B cell (primary cell): ENCODE measurements at regions of chr1 and their contacts with region 1.

Region 1: GRCh38 chr1:221045842-221046831 is 166.9 kb downstream of the HLX start:
- DNase-seq: peak; percentile 82
- ATAC-seq: peak; percentile 87
- H3K4me3 ChIP-seq: peak overlapping the region in 4 of 5 experiments; percentile 11 to 52 (median 36)
- H3K4me3 Mint-ChIP-seq: peak overlapping the region; percentile 88
- H3K27ac ChIP-seq: peak overlapping the region; percentile 75 to 94
- H3K27ac Mint-ChIP-seq: peak overlapping the region; percentile 97
- H3K4me1 ChIP-seq: peaks cover 34 to 36% of the 10 kb centered on the region in 2 donors
- H3K4me1 Mint-ChIP-seq: peaks cover 54% of the 10 kb centered on the region
- H3K27me3 ChIP-seq: no peaks in the 10 kb centered on the region
- H3K27me3 Mint-ChIP-seq: no peaks in the 10 kb centered on the region
- CTCF ChIP-seq: no peak

Region 2: DNA sequence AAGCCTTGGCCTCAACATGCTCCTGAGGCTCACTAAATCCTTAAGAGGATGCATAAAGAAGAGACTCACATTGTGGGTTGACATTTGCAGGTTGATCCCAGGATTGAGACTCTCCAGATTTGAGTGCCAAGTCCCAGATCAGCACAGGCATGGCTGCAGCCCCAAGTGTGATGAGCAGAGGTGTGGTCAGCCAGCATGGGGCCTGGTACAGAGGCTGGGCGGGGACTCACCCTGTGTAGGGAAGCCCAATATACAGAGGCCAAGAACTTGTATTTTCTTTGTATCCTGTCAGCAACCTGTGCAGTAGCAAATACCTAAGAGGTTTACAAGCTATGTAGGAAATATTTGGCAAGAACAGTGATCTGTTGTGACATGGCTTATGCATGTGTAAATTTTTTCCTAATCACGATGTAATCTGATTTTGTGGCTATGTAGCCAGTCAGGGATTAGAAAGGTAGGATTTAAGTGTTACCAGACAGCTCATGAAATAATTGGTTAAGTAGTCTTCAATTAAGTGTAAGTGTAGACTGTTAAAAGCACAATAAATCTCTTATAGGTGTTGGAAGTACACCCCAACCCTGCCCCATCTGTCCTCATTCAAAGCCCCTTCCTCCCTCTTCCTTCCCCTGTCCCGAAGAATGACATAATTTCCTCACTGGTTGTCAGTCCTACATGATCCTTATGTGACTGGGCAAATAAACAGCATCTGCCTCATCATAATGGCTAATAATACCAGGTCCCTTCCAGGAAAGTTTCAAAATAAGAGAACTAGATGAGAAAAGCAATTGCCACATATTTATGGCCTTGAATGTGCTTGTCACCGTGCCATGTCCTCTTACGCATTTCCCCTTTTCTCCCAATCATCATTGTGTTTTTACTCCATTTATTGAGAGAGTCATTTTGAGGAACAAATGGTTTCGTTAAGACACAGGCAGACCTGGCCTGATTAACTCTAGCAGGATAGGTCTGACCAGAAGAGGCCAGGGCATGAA is 46.0 kb before region 1 on chr1:
- CTCF ChIA-PET with region 1: no interaction called
- POLR2A ChIA-PET with region 1: no interaction called
- intact Hi-C with region 1: no loop called
- DNase-seq: no peak
- ATAC-seq: no peak
- H3K4me3 ChIP-seq: no peak overlapping the region
- H3K4me3 Mint-ChIP-seq: no peak overlapping the region
- H3K27ac ChIP-seq: no peak overlapping the region
- H3K27ac Mint-ChIP-seq: no peak overlapping the region
- H3K4me1 ChIP-seq: peaks cover 0 to 3% of the 10 kb centered on the region in 2 donors
- H3K4me1 Mint-ChIP-seq: no peaks in the 10 kb centered on the region
- H3K27me3 ChIP-seq: no peaks in the 10 kb centered on the region
- H3K27me3 Mint-ChIP-seq: no peaks in the 10 kb centered on the region
- CTCF ChIP-seq: no peak

Region 3: DNA sequence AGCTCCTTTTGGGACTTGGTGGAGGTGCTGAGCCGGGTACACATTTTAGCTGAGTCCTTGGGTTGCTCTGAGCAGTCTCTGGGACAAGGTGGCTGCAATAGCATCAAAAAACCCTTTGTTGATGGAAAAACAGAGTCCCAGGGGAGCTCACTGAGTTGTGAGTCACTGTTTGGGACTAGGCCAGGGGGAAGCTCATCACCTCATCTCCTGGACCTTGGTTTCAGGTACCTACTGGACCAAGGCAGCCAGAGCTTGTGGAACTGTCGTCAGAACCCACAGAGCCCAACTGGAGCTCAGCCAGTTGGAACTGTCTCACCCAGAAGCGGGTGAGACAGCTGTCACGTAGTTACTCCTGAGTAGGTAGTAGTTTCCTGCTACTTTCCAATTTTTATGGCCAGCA is 20.2 kb before region 1 on chr1:
- CTCF ChIA-PET with region 1: interaction called, 5 read pairs
- POLR2A ChIA-PET with region 1: interaction called, 5 read pairs
- intact Hi-C with region 1: loop called (anchors 1 kb)
- DNase-seq: peak; percentile 61
- ATAC-seq: peak; percentile 95
- H3K4me3 ChIP-seq: no peak overlapping the region
- H3K4me3 Mint-ChIP-seq: peak overlapping the region; percentile 1
- H3K27ac ChIP-seq: no peak overlapping the region
- H3K27ac Mint-ChIP-seq: peak overlapping the region; percentile 56
- H3K4me1 ChIP-seq: peaks cover 12 to 13% of the 10 kb centered on the region in 2 donors
- H3K4me1 Mint-ChIP-seq: peaks cover 25% of the 10 kb centered on the region
- H3K27me3 ChIP-seq: no peaks in the 10 kb centered on the region
- H3K27me3 Mint-ChIP-seq: no peaks in the 10 kb centered on the region
- CTCF ChIP-seq: no peak

Region 4: GRCh38 chr1:221069178-221069903 is 23.2 kb after region 1 on chr1:
- CTCF ChIA-PET with region 1: interaction called, 16 read pairs
- POLR2A ChIA-PET with region 1: interaction called, 8 read pairs
- intact Hi-C with region 1: loop called (anchors 1 kb)
- DNase-seq: peak; percentile 85
- ATAC-seq: peak; percentile 85
- H3K4me3 ChIP-seq: peak overlapping the region in 4 of 5 experiments; percentile 13 to 46 (median 28)
- H3K4me3 Mint-ChIP-seq: peak overlapping the region; percentile 76
- H3K27ac ChIP-seq: peak overlapping the region; percentile 80 to 87
- H3K27ac Mint-ChIP-seq: peak overlapping the region; percentile 99
- H3K4me1 ChIP-seq: peaks cover 68 to 75% of the 10 kb centered on the region in 2 donors
- H3K4me1 Mint-ChIP-seq: peaks cover 78% of the 10 kb centered on the region
- H3K27me3 ChIP-seq: no peaks in the 10 kb centered on the region
- H3K27me3 Mint-ChIP-seq: no peaks in the 10 kb centered on the region
- CTCF ChIP-seq: no peak

Region 5: GRCh38 chr1:221157026-221157761 is 111.1 kb after region 1 on chr1:
- CTCF ChIA-PET with region 1: no interaction called
- POLR2A ChIA-PET with region 1: no interaction called
- intact Hi-C with region 1: loop called (anchors 2 kb)
- DNase-seq: peak; percentile 76
- ATAC-seq: peak; percentile 89
- H3K4me3 ChIP-seq: peak overlapping the region in 1 of 5 experiments; percentile 12
- H3K4me3 Mint-ChIP-seq: peak overlapping the region; percentile 52
- H3K27ac ChIP-seq: peak overlapping the region; percentile 37 to 42
- H3K27ac Mint-ChIP-seq: peak overlapping the region; percentile 74
- H3K4me1 ChIP-seq: peaks cover 24 to 30% of the 10 kb centered on the region in 2 donors
- H3K4me1 Mint-ChIP-seq: peaks cover 33% of the 10 kb centered on the region
- H3K27me3 ChIP-seq: peaks cover 0 to 8% (median 2%) of the 10 kb centered on the region in 4 experiments
- H3K27me3 Mint-ChIP-seq: no peaks in the 10 kb centered on the region
- CTCF ChIP-seq: no peak